Astrocyte of the cerebellum (primary cell): ENCODE measurements at regions of chr11 and their contacts with region 1.

Region 1: DNA sequence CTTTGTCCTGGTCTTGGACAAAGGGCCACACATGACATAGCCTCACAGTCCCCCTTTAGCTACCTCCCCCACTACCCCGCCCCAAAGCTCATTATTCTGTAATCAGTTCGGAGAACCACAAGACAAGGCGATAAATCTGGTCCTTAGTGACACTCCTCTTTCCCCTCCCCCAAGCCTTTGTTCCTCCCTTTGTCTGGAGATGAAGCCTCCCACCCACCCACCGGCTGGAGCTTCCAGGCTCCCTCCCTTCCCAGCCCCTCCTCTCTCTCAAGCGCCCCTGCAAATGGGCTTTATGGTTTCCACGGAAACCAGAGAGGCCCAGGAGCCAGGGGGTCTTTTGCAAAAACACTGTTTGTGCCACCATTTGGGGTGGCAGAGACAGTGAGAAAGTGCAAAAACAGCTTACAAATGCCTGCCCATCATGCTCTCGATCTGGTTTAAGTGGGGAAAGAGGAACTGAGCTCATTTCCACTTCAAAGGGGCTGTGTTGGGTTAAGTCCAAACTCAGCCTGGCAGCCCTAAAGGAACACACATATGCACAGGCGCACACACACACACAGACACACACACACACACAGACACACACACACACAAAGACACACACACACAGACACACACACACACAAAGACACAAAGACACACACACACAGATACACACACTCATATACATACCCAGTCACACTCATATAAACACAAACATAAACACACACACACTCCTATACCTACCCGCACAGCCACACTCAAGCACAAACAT is 23.5 kb downstream of the APLNR start:
- DNase-seq: peak; percentile 22
- H3K4me3 ChIP-seq: no peak overlapping the region
- CTCF ChIP-seq: no peak

Region 2: DNA sequence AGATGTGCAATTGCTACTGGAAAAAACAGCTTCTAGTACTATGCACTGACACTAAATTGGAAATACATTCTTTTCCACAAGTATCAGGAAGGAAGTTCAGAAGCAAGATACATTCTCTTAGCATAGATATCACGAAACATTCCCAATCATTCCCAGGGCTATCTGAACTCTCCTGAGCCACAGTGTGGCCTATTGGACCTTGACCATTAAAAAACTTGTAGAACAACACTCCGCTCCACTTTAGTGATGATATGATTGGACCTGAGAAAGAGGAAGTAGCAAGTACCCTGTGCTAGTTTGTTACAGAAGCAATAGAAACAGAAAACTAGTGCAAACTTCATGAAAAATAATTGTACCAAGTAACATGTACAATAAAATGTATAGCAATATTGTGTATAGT is 236.2 kb before region 1 on chr11:
- in situ Hi-C with region 1: no loop called
- DNase-seq: no peak
- H3K4me3 ChIP-seq: no peak overlapping the region
- CTCF ChIP-seq: no peak

Region 3: DNA sequence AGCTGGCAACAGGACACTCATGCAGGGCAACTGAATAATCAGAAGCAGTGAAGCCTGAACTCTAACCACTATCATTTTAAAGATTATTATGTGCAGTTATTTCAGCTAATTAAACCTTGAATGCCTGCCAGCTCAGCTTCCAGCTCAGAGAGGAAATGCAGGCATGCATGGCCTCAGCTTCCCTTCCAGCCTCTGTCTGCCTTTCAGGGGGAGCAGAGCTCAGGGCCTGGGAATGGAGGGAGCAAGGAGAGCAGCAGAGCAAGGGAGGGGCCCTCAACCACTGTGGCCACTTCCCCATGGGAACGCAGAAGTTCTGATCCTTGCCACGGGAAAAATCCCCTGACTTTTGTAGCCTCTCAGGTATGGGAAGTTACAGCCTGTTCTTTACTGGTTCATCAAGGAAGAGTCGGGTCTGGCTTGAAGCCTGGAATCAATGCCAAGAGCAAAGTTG is 56.1 kb after region 1 on chr11:
- in situ Hi-C with region 1: no loop called
- DNase-seq: no peak
- H3K4me3 ChIP-seq: no peak overlapping the region
- CTCF ChIP-seq: no peak

Region 4: GRCh38 chr11:57288771-57289579 is 75.5 kb after region 1 on chr11:
- in situ Hi-C with region 1: loop called (anchors 5 kb)
- DNase-seq: peak; percentile 32
- H3K4me3 ChIP-seq: no peak overlapping the region
- CTCF ChIP-seq: no peak